BJ (cell line): ENCODE measurements at regions of chr1 and their contacts with region 1.

Region 1: DNA sequence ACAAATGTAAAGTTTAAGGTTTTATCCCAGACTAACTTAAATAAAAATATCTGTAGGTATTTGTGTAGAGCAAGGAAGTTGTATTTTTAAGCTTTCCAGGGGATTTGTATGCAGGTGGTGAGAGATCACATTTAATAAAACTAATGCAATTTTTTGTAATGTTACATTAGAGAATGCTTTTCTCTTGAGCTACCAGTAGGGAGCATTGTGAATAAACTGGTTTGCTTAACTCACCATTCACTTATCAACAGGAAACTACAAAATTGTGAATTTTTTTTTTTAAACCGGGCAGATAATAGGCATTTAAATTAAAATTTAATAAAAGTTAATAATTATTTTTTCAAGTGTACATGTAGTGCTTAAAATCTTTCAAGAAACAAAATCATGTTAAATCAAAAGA is 78.6 kb downstream of the IVNS1ABP start:
- DNase-seq: no peak
- H3K4me3 ChIP-seq: no peak overlapping the region
- H3K27me3 ChIP-seq: no peaks in the 10 kb centered on the region
- CTCF ChIP-seq: peak; percentile 48

Region 2: DNA sequence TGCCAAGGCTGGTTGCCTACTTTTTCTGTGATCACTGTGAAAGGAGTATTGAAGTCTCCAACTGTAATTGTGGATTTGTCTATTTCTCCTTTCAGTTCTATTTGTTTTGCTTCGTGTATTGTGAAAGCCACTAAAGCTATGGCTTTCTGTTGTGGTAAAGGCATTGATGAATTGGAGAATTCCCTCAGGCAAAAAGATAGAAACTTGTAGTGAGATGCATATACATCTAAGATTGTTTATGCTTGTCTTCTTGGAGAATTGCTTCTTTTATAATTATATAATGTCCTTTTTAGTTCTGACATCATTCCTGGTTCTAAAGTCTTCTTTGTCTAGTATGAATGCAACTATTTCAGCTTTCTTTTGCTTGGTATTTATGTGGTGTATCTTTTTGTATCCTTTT is 44.7 kb before region 1 on chr1:
- CTCF ChIA-PET with region 1: no interaction called
- POLR2A ChIA-PET with region 1: no interaction called
- DNase-seq: no peak
- H3K4me3 ChIP-seq: no peak overlapping the region
- H3K27me3 ChIP-seq: no peaks in the 10 kb centered on the region
- CTCF ChIP-seq: no peak

Region 3: GRCh38 chr1:185681034-185681633 is 442.7 kb after region 1 on chr1:
- CTCF ChIA-PET with region 1: interaction called, 19 read pairs
- POLR2A ChIA-PET with region 1: no interaction called
- DNase-seq: no peak
- H3K4me3 ChIP-seq: no peak overlapping the region
- H3K27me3 ChIP-seq: no peaks in the 10 kb centered on the region; the same call in 1 of the 2 replicates
- CTCF ChIP-seq: peak; percentile 59